Dendritic cell treated with granulocyte-macrophage colony-stimulating factor and Interleukin-4, amounts not matched to agents 40 ng/mL and 50 ng/mL, for 4 days (primary cell): ENCODE measurements at regions of chr16 and their contacts with region 1.

Region 1: GRCh38 chr16:2520092-2520783 is at the start of gene AMDHD2:
- H3K4me3 Mint-ChIP-seq: peak within 1 kb of the TSS; percentile 91
- H3K27ac Mint-ChIP-seq: peak within 1 kb of the TSS; percentile 99
- H3K4me1 Mint-ChIP-seq: peaks cover 75% of the 10 kb centered on the region
- H3K27me3 Mint-ChIP-seq: no peaks in the 10 kb centered on the region

Region 2: DNA sequence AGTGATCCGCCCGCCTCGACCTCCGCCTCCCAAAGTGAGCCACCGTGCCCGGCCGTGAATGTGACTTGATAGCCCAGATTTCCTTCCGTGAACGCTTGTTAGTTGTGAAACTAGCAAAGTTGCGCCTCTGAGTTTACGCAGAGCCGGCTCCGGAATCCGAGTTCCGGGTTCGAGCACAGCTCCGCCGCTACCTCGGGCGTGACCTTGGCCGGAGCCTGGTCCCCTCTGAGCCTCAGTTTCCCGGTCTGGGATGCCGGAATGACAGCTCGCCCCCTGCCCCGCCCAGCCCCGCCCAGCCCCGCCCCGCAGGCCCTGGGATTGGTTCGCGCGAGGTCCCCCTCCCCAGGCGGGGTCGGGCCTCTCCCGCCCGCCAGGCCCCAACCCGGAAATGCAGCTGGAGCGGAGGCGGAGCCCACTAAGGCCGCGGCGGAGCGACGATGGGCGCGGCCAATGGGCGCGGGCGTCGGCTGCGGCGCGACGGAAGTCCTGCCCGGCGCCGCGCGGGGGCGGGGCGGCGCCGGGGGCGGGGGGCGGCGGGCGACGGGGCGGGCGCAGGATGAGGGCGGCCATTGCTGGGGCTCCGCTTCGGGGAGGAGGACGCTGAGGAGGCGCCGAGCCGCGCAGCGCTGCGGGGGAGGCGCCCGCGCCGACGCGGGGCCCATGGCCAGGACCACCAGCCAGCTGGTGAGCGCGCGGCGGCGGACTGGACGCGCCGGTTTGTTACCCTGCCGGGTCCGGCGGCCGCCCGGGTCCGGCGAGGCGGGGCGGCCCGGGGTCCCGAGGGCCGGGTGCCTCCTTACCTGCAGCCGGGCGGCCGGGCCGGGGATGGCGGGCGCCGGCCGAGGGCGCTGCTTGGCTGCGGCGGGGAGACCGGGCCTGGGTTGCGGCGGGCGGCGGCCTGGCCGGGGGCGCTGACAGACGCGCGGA is 17.5 kb after region 1 on chr16 and contains the start of gene PDPK1:
- intact Hi-C with region 1: loop called (anchors 2 kb)
- H3K4me3 Mint-ChIP-seq: peak within 1 kb of the TSS; percentile 82
- H3K27ac Mint-ChIP-seq: peak within 1 kb of the TSS; percentile 92
- H3K4me1 Mint-ChIP-seq: peaks cover 62% of the 10 kb centered on the region
- H3K27me3 Mint-ChIP-seq: no peaks in the 10 kb centered on the region

Region 3: GRCh38 chr16:3580689-3581088 is 1060.5 kb after region 1 on chr16:
- intact Hi-C with region 1: no loop called
- H3K4me3 Mint-ChIP-seq: no peak overlapping the region
- H3K27ac Mint-ChIP-seq: peak overlapping the region; percentile 43
- H3K4me1 Mint-ChIP-seq: peaks cover 56% of the 10 kb centered on the region
- H3K27me3 Mint-ChIP-seq: peaks cover 34% of the 10 kb centered on the region